Breast epithelium (tissue), 4 donors: ENCODE measurements at regions of chr15 and their contacts with region 1.

Region 1: DNA sequence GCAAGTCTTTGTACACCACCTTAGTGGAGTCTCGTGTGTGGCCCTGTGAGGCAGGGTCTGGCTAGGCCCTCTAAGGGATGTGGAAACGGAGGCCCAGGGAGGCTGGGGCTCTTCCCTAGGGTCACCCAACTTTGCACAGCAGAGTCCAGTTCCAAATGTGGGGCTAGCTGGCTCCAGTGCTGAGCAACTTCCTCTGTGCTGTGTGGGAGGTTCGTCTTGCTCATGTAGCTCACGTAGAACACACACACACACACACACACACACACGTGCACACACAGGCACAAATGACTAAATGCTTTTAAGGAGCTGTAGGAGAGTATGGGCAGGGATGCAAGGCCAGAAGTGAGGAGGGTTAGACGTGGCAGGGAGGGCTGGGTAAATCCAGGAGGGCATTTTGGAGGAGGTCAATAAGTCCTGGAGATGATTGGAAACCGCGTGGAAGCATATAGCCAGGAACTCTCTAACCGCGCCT is 213.8 kb downstream of the RPLP1 start:
- DNase-seq: no peak
- H3K4me3 ChIP-seq: no peak overlapping the region
- H3K27ac ChIP-seq: no peak overlapping the region
- H3K4me1 ChIP-seq: no peaks in the 10 kb centered on the region
- H3K27me3 ChIP-seq: no peaks in the 10 kb centered on the region
- CTCF ChIP-seq: no peak
- POLR2A ChIP-seq: no peak

Region 2: DNA sequence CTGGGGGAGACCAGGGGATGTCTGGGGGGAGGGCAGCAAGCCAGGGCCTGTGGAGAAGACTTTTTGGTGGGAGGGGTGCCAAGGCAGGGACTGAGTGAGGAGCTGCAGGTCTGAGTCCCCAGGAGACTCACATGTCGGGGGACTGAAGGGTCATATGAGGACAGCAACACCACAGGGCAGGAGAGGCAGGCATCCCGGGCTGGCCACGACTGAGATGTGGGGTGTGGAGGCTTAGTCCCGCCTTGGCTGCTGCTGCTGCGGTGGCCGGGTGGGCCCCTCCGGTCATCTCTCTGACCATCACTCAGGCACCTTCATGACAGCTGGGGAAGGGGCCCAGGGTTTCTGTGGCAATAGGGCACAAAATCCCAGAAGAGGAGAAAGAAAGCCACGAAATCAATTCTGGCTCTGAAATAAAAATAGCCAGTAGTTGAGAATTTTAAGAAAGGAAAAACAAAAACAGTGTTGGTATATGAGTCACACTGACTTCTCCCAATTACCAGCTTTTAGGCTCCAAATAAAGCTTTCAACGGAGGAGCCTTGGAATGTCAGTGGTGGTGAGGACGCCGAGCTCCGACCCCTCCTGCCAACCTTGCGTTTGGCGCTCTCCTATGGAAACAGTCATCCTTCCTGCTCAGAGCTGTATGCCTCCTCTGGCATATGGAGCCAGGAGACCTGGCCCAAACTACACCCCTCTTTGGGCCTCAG is 1181.6 kb before region 1 on chr15:
- intact Hi-C with region 1: loop called (anchors 5 kb)
- DNase-seq: no peak
- H3K4me3 ChIP-seq: peak overlapping the region in 1 of 3 donors; percentile 15
- H3K27ac ChIP-seq: peak overlapping the region; percentile 63 to 89
- H3K4me1 ChIP-seq: no peaks in the 10 kb centered on the region
- H3K27me3 ChIP-seq: no peaks in the 10 kb centered on the region
- CTCF ChIP-seq: no peak
- POLR2A ChIP-seq: no peak